Spleen (tissue), 13 donors: ENCODE measurements at regions of chr9 and their contacts with region 1.

Region 1: GRCh38 chr9:117777823-117778222 is 73.6 kb downstream of the TLR4 start:
- DNase-seq: no peak
- H3K4me3 ChIP-seq: no peak overlapping the region
- H3K27ac ChIP-seq: peak overlapping the region in 1 of 8 donors; percentile 4
- H3K4me1 ChIP-seq: peaks cover 0 to 34% (median 11%) of the 10 kb centered on the region in 6 donors
- H3K27me3 ChIP-seq: no peaks in the 10 kb centered on the region
- CTCF ChIP-seq: no peak
- POLR2A ChIP-seq: no peak

Region 2: DNA sequence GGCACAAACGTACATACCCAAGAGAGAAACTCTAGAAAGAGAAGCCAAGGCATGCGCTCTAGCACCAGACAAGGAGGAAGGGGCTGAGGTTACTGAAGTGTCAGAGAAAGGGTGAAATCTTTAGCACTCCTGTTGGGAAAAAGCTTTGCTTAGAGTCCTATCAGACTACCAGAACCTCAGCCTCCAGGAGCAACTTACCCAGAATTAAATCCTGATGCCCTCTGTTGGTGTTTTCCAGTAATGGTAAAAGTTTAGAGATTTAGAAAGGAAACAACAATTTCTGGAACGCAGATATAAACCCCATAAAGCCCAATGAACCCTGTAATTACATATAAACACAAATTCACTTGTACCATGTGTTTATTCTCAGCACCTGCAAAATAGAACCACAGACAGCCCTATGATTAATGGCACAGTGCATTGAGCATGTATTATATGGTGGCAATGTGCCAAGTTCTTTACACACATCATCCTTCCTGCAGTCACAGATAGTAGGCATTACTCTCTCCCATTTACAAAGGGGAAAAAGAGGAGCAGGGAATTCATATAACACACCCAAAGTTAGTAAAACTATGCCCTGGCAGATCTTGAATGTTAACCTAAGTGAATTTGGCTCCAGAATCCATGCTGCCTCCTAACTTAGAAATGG is 329.6 kb before region 1 on chr9:
- intact Hi-C with region 1: no loop called
- DNase-seq: no peak
- H3K4me3 ChIP-seq: no peak overlapping the region
- H3K27ac ChIP-seq: no peak overlapping the region
- H3K4me1 ChIP-seq: no peaks in the 10 kb centered on the region
- H3K27me3 ChIP-seq: no peaks in the 10 kb centered on the region
- CTCF ChIP-seq: peak in 1 of 11 experiments; percentile 13
- POLR2A ChIP-seq: no peak

Region 3: DNA sequence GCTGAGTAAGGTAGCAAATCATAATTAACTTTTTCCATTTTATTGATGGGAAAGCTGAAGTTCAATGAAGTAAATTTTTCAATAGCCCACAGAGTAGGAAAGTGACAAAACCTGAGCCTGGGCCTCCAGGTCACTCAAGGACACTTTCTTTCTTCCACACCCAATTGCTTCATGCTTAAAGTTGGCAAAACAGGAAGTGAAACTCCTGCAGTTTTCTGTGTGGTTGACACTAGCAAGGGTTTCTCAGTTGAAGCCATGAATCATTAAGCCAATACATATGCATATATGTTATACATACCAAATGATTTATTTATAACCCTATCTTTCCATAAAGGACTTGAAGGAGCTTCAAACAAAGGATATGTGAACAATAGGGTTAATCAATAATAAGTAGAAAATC is 59.7 kb before region 1 on chr9:
- intact Hi-C with region 1: loop called (anchors 10 kb)
- DNase-seq: no peak
- H3K4me3 ChIP-seq: peak overlapping the region in 1 of 8 donors; percentile 30
- H3K27ac ChIP-seq: peak overlapping the region in 7 of 8 donors; percentile 14 to 85 (median 61)
- H3K4me1 ChIP-seq: peaks cover 17 to 100% (median 71%) of the 10 kb centered on the region in 6 donors
- H3K27me3 ChIP-seq: peaks cover 0 to 4% (median 0%) of the 10 kb centered on the region in 7 donors
- CTCF ChIP-seq: no peak
- POLR2A ChIP-seq: no peak